Natural killer cell (primary cell): ENCODE measurements at regions of chr1 and their contacts with region 1.

Region 1: GRCh38 chr1:15062479-15063099 is 91.0 kb upstream of the TMEM51 start:
- DNase-seq: no peak
- ATAC-seq: no peak
- H3K4me3 ChIP-seq: no peak overlapping the region
- H3K4me3 Mint-ChIP-seq: no peak overlapping the region
- H3K27ac ChIP-seq: no peak overlapping the region
- H3K27ac Mint-ChIP-seq: no peak overlapping the region
- H3K4me1 ChIP-seq: peaks cover 34% of the 10 kb centered on the region
- H3K4me1 Mint-ChIP-seq: peaks cover 20 to 47% of the 10 kb centered on the region in 2 donors
- H3K27me3 ChIP-seq: no peaks in the 10 kb centered on the region
- H3K27me3 Mint-ChIP-seq: peaks cover 4 to 7% of the 10 kb centered on the region in 2 donors
- CTCF ChIP-seq: peak; percentile 66

Region 2: DNA sequence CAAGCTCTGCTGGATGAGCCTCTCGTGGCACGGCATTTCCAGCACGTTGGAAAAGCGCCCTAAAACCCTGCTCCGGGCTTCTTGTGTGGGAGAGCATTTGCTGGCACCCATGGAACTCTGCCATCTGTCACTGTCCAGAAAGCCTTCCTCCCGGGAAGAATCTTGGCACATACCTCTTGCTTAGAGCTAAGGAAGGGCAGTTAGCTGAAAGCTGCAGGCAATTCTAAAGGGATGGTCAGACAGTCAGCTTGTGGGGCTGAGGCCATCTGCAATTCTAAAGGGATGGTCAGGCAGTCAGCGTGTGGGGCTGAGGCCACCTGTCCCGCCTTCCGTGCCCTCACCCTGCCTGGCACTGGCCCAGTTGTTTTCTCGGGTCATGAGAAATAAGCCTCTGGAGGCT is 48.1 kb before region 1 on chr1:
- intact Hi-C with region 1: no loop called
- DNase-seq: no peak
- ATAC-seq: no peak
- H3K4me3 ChIP-seq: no peak overlapping the region
- H3K4me3 Mint-ChIP-seq: no peak overlapping the region
- H3K27ac ChIP-seq: no peak overlapping the region
- H3K27ac Mint-ChIP-seq: no peak overlapping the region
- H3K4me1 ChIP-seq: peaks cover 3% of the 10 kb centered on the region
- H3K4me1 Mint-ChIP-seq: no peaks in the 10 kb centered on the region
- H3K27me3 ChIP-seq: no peaks in the 10 kb centered on the region
- H3K27me3 Mint-ChIP-seq: peaks cover 0 to 5% of the 10 kb centered on the region in 2 donors
- CTCF ChIP-seq: no peak

Region 3: GRCh38 chr1:15080328-15081007 is 17.9 kb after region 1 on chr1:
- intact Hi-C with region 1: loop called (anchors 1 kb)
- DNase-seq: peak in 1 of 2 donors; percentile 61
- ATAC-seq: peak; percentile 77 to 97 (median 78)
- H3K4me3 ChIP-seq: no peak overlapping the region
- H3K4me3 Mint-ChIP-seq: peak overlapping the region; percentile 80
- H3K27ac ChIP-seq: peak overlapping the region; percentile 48
- H3K27ac Mint-ChIP-seq: peak overlapping the region; percentile 88 to 91
- H3K4me1 ChIP-seq: peaks cover 41% of the 10 kb centered on the region
- H3K4me1 Mint-ChIP-seq: peaks cover 40 to 71% of the 10 kb centered on the region in 2 donors
- H3K27me3 ChIP-seq: no peaks in the 10 kb centered on the region
- H3K27me3 Mint-ChIP-seq: peaks cover 2 to 32% of the 10 kb centered on the region in 2 donors
- CTCF ChIP-seq: no peak

Region 4: DNA sequence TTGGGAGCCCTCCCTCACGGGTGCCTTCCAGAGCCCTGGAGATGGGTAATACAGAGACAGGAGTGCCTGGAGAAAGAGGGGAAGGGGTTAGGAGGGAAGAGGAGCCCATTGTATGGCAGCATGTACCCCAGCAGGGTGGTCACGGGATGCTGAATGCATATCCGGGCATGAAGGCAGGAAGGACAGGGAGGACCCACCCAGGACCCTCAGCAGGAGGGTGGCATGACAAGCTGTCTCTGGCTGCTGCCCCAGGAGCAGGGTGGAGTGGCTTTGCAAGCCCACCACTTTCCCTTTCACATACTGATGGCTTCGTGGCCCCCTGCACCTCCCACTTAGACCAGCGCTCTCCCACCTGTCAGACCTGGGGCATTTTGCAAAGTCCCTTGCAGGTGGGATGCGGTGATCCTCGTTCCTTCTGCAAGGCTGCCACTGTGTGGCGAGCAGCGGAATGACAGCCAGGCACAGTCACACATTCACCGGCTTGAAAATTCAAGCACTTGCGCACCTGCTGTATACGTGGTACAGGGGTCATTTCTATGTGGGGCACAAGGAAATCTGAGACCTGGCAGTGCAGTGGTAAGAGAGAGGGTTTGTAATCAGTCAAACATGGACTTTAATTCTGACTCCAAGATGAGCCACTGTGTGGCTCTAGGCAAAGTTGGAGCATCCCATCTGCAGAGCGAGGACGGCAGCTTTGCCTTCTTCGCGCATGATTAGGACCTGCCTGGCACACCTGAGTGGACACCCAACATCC is 37.7 kb after region 1 on chr1:
- intact Hi-C with region 1: loop called (anchors 1 kb)
- DNase-seq: peak; percentile 60 to 67
- ATAC-seq: peak; percentile 62 to 94 (median 92)
- H3K4me3 ChIP-seq: no peak overlapping the region
- H3K4me3 Mint-ChIP-seq: no peak overlapping the region
- H3K27ac ChIP-seq: no peak overlapping the region
- H3K27ac Mint-ChIP-seq: peak overlapping the region in 1 of 2 donors; percentile 78
- H3K4me1 ChIP-seq: peaks cover 11% of the 10 kb centered on the region
- H3K4me1 Mint-ChIP-seq: peaks cover 30 to 34% of the 10 kb centered on the region in 2 donors
- H3K27me3 ChIP-seq: peaks cover 12% of the 10 kb centered on the region
- H3K27me3 Mint-ChIP-seq: peaks cover 16 to 34% of the 10 kb centered on the region in 2 donors
- CTCF ChIP-seq: peak; percentile 97

Region 5: GRCh38 chr1:15246960-15247614 is 184.5 kb after region 1 on chr1 and contains the start of gene FHAD1:
- intact Hi-C with region 1: loop called (anchors 5 kb)
- DNase-seq: peak; percentile 70 to 71
- ATAC-seq: peak; percentile 63 to 80 (median 66)
- H3K4me3 ChIP-seq: no peak within 1 kb of the TSS
- H3K4me3 Mint-ChIP-seq: peak within 1 kb of the TSS; percentile 77
- H3K27ac ChIP-seq: no peak within 1 kb of the TSS
- H3K27ac Mint-ChIP-seq: peak within 1 kb of the TSS; percentile 14 to 91
- H3K4me1 ChIP-seq: peaks cover 36% of the 10 kb centered on the region
- H3K4me1 Mint-ChIP-seq: peaks cover 52 to 53% of the 10 kb centered on the region in 2 donors
- H3K27me3 ChIP-seq: peaks cover 6% of the 10 kb centered on the region
- H3K27me3 Mint-ChIP-seq: peaks cover 9 to 22% of the 10 kb centered on the region in 2 donors
- CTCF ChIP-seq: no peak
- total RNA-seq, gene FHAD1: 0.72 to 1.9 (median 1.7) TPM

Region 6: DNA sequence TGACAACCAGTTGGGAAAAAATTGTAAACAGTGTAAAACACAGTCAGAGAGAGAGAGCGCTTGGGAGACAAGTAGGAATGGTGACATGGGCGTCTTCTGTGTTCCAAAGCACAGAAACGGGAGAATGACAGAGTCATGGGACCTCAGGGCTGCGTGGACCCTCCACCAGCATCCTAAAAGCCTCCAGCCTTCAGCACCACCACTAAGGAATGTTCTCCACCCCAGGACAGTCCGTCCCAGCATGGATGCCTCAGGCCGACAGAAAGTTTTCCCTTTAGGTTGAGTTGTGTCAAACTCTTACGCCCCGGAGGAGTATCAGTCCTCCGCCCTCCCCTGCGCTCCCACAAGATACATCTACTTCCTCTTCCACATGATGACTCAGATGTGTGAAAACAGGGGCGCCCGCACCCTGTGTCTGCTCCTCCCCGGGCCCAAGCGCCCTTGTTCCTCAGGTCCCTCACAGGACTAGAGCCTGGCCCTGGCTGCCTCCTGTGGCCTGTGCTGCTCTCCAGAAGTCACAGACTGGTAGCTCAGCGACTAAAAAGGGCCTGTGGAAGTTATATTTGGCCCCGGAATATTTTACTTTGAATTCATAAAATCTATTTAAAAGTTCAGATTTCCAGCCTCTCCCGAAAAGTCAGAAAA is 283.2 kb after region 1 on chr1:
- intact Hi-C with region 1: loop called (anchors 1 kb)
- DNase-seq: peak; percentile 78 to 82
- ATAC-seq: peak; percentile 85 to 94 (median 91)
- H3K4me3 ChIP-seq: no peak overlapping the region
- H3K4me3 Mint-ChIP-seq: peak overlapping the region; percentile 79
- H3K27ac ChIP-seq: peak overlapping the region; percentile 94
- H3K27ac Mint-ChIP-seq: peak overlapping the region; percentile 88
- H3K4me1 ChIP-seq: peaks cover 86% of the 10 kb centered on the region
- H3K4me1 Mint-ChIP-seq: peaks cover 72 to 87% of the 10 kb centered on the region in 2 donors
- H3K27me3 ChIP-seq: no peaks in the 10 kb centered on the region
- H3K27me3 Mint-ChIP-seq: no peaks in the 10 kb centered on the region
- CTCF ChIP-seq: no peak

Region 7: GRCh38 chr1:15409388-15410222 is 347.0 kb after region 1 on chr1 and contains the start of gene EFHD2:
- intact Hi-C with region 1: loop called (anchors 1 kb)
- DNase-seq: peak; percentile 93 to 99
- ATAC-seq: peak; percentile 47 to 79 (median 66)
- H3K4me3 ChIP-seq: peak within 1 kb of the TSS; percentile 97
- H3K4me3 Mint-ChIP-seq: peak within 1 kb of the TSS; percentile 97
- H3K27ac ChIP-seq: peak within 1 kb of the TSS; percentile 99
- H3K27ac Mint-ChIP-seq: peak within 1 kb of the TSS; percentile 93 to 100
- H3K4me1 ChIP-seq: peaks cover 81% of the 10 kb centered on the region
- H3K4me1 Mint-ChIP-seq: peaks cover 76 to 85% of the 10 kb centered on the region in 2 donors
- H3K27me3 ChIP-seq: no peaks in the 10 kb centered on the region
- H3K27me3 Mint-ChIP-seq: no peaks in the 10 kb centered on the region
- CTCF ChIP-seq: no peak
- total RNA-seq, gene EFHD2: 804 to 952 (median 855) TPM